Head of caudate nucleus (tissue), 42 donors: ENCODE measurements at regions of chr4 and their contacts with region 1.

Region 1: GRCh38 chr4:55312489-55313101 is 33.4 kb upstream of the SRD5A3 start:
- DNase-seq: peak in 35 of 42 donors; percentile 13 to 81 (median 46)

Region 2: GRCh38 chr4:55008166-55009070 is 304.2 kb before region 1 on chr4:
- intact Hi-C with region 1: no loop called
- DNase-seq: peak in 8 of 42 donors; percentile 4 to 52 (median 16)

Region 3: GRCh38 chr4:55089916-55090315 is 222.7 kb before region 1 on chr4:
- intact Hi-C with region 1: loop called (anchors 10 kb)
- DNase-seq: peak in 1 of 42 donors; percentile 16

Region 4: GRCh38 chr4:55125087-55125721 is 187.4 kb before region 1 on chr4 and contains the start of gene KDR:
- intact Hi-C with region 1: no loop called
- DNase-seq: peak in 34 of 42 donors; percentile 4 to 79 (median 36)

Region 5: DNA sequence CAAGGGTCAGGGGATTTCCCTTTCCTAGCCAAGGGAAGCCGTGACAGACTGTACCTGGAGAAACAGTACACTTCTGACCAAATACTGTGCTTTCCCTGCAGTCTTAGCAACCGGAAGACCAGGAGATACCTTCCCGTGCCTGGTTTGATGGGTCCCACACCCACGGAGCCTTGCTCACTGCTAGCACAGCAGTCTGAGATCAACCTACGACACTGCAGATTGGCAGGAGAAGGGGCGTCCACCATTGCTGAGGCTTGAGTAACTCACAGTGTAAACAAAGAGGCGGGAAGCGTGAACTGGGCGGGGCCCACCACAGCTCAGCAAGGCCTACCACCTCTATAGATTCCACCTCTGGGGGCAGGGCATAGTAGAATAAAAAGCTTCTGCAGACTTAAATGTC is 15.2 kb before region 1 on chr4:
- intact Hi-C with region 1: no loop called
- DNase-seq: no peak